ENCODE measurements at regions of chr3 and their contacts with region 1.

Region 1: GRCh38 chr3:187255314-187255713 is 36.2 kb downstream of the MASP1 start:
- DNase-seq: no peak
- H3K4me3 ChIP-seq: no peak overlapping the region
- H3K27ac ChIP-seq: no peak overlapping the region
- H3K4me1 ChIP-seq: peaks cover 0 to 3% (median 0%) of the 10 kb centered on the region in 4 experiments; a peak in 1 of 7 replicates
- H3K27me3 ChIP-seq: no peaks in the 10 kb centered on the region
- CTCF ChIP-seq: no peak
- EP300 ChIP-seq: no peak
- POLR2A ChIP-seq: no peak
- RAD21 ChIP-seq: no peak

Region 2: GRCh38 chr3:187243933-187244524 is 11.3 kb before region 1 on chr3:
- CTCF ChIA-PET with region 1: interaction called, 11 read pairs
- POLR2A ChIA-PET with region 1: interaction called, 3 read pairs
- DNase-seq: no peak
- H3K4me3 ChIP-seq: no peak overlapping the region
- H3K27ac ChIP-seq: no peak overlapping the region
- H3K4me1 ChIP-seq: no peaks in the 10 kb centered on the region
- H3K27me3 ChIP-seq: peaks cover 0 to 2% (median 0%) of the 10 kb centered on the region in 4 experiments; a peak in 2 of 7 replicates
- CTCF ChIP-seq: no peak
- EP300 ChIP-seq: no peak
- POLR2A ChIP-seq: no peak
- RAD21 ChIP-seq: no peak

Region 3: GRCh38 chr3:187430576-187430975 is 175.3 kb after region 1 on chr3:
- CTCF ChIA-PET with region 1: no interaction called
- POLR2A ChIA-PET with region 1: no interaction called
- DNase-seq: no peak
- H3K4me3 ChIP-seq: no peak overlapping the region
- H3K27ac ChIP-seq: no peak overlapping the region
- H3K4me1 ChIP-seq: no peaks in the 10 kb centered on the region; a peak in 1 of 7 replicates
- H3K27me3 ChIP-seq: no peaks in the 10 kb centered on the region
- CTCF ChIP-seq: peak; percentile 17 to 58 (median 56)
- EP300 ChIP-seq: no peak
- POLR2A ChIP-seq: no peak
- RAD21 ChIP-seq: peak in 1 of 2 experiments; percentile 72; a peak in 3 of 4 replicates

Measured in H1 (cell line).